AG04450 (cell line): ENCODE measurements at regions of chrX and their contacts with region 1.

Region 1: GRCh38 chrX:48911412-48912182 is at the start of gene SLC35A2:
- DNase-seq: no peak
- H3K4me3 ChIP-seq: peak within 1 kb of the TSS; percentile 83
- H3K27ac ChIP-seq: peak within 1 kb of the TSS; percentile 75
- H3K27me3 ChIP-seq: no peaks in the 10 kb centered on the region
- CTCF ChIP-seq: no peak
- polyA plus RNA-seq, gene SLC35A2: 39.2 and 47.5 TPM in 2 replicates

Region 2: GRCh38 chrX:48897621-48898306 is 13.8 kb before region 1 on chrX and contains the starts of genes PQBP1 and TIMM17B:
- CTCF ChIA-PET with region 1: no interaction called
- POLR2A ChIA-PET with region 1: interaction called, 11 read pairs
- DNase-seq: peak; percentile 88
- H3K4me3 ChIP-seq: peak within 1 kb of the TSS; percentile 80
- H3K27ac ChIP-seq: peak within 1 kb of the TSS; percentile 91
- H3K27me3 ChIP-seq: no peaks in the 10 kb centered on the region
- CTCF ChIP-seq: no peak
- polyA plus RNA-seq, gene PQBP1: 49.5 and 69.3 TPM in 2 replicates
- polyA plus RNA-seq, gene TIMM17B: 31.2 and 42.1 TPM in 2 replicates

Region 3: DNA sequence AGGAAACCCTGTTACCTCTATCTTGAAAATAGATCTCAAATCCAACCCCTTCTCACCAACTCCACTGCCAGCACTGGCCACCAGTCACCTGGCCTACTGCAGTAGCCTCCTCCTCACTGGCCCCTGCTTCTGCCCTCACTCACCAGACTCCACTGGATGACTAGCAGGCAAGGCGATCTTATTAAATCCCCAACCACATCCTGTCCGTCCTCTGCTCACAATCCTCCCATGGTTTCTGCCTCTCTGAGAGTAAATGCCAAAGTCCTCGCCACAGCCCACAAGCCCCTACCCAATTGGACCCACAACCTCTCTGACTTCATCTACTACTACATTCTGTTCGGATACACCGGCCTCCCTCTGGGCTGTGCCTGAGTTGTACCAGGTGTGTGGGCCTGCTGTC is 12.7 kb after region 1 on chrX:
- CTCF ChIA-PET with region 1: no interaction called
- POLR2A ChIA-PET with region 1: no interaction called
- DNase-seq: no peak
- H3K4me3 ChIP-seq: no peak overlapping the region
- H3K27ac ChIP-seq: no peak overlapping the region
- H3K27me3 ChIP-seq: no peaks in the 10 kb centered on the region
- CTCF ChIP-seq: no peak

Region 4: GRCh38 chrX:49111791-49112190 is 200.2 kb after region 1 on chrX:
- CTCF ChIA-PET with region 1: no interaction called
- POLR2A ChIA-PET with region 1: interaction called, 15 read pairs
- DNase-seq: no peak
- H3K4me3 ChIP-seq: no peak overlapping the region
- H3K27ac ChIP-seq: no peak overlapping the region
- H3K27me3 ChIP-seq: no peaks in the 10 kb centered on the region
- CTCF ChIP-seq: no peak